ENCODE measurements at regions of chr12 and their contacts with region 1.

Region 1: DNA sequence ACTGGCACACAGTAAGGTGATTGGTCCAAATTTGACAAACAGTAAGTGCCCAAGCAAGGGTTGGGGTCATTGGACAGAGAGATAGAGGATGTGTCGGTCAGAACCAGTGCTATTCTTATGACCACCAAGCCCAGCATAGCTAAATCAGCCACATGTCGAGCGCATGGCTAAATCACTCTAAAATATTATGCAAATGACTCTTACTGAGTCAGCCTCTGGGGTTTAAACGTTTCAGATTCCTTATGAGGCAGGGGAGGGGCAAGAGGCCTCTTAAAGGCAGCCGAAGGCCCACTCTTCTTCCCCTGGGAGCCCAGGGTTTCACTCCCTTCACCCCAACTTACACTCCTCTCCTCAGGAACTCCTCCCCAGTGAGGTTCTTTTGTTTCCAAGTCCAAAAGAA is 603 bp upstream of the ENDOU start:
- DNase-seq: no peak
- ATAC-seq: no peak

Region 2: GRCh38 chr12:47763481-47764346 is 37.8 kb after region 1 on chr12:
- intact Hi-C with region 1: loop called (anchors 5 kb)
- DNase-seq: no peak
- ATAC-seq: no peak